ENCODE measurements at regions of chr20 and their contacts with region 1.

Region 1: DNA sequence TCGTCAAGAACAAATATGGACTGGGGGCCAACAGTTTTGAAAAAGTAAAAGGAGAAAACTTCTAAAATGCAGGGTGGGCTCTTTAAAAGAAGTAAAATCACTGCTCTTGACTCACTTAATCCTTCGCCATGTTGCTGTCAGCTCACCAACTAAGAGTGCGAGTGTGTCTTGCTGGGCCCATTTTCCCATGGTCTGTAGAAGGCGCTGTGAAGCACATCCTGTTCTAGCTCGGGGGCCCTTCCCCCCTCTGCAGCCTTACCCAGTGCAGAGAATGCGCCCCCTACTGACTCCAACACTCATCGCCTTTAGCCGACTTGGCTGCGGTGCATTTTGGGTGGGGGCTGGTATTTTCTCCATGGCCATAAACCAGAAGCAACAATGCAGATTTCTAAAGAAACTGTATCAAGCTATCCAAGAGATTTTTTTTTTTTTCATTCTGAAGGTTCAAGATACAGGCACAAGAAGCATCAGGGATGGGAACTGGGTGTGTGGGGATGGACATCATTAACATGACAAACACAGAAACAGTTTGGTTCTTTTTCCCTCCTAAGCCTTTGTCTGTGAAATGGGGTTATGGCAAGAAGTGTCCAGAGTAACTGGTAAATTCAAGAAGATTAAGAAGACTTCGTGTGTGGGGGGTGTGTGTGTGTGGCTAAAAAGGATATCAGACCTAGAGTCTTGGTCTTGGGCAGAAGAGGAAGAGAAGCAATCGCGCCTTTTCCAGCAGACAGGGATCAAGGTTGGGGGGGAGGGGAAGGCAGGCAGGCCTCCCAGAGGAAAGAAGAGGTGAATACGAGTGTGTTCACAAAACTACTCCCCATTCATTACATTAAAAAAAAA is 1.7 kb downstream of the ADNP start:
- DNase-seq: peak; percentile 79 to 96 (median 91)
- ATAC-seq: peak; percentile 50 to 69
- H3K4me3 Mint-ChIP-seq: peak overlapping the region; percentile 86 to 98 (median 93)
- H3K27ac Mint-ChIP-seq: peak overlapping the region; percentile 89 to 98 (median 96)
- H3K4me1 Mint-ChIP-seq: peaks cover 23 to 60% (median 56%) of the 10 kb centered on the region in 4 donors
- H3K27me3 Mint-ChIP-seq: no peaks in the 10 kb centered on the region

Region 2: DNA sequence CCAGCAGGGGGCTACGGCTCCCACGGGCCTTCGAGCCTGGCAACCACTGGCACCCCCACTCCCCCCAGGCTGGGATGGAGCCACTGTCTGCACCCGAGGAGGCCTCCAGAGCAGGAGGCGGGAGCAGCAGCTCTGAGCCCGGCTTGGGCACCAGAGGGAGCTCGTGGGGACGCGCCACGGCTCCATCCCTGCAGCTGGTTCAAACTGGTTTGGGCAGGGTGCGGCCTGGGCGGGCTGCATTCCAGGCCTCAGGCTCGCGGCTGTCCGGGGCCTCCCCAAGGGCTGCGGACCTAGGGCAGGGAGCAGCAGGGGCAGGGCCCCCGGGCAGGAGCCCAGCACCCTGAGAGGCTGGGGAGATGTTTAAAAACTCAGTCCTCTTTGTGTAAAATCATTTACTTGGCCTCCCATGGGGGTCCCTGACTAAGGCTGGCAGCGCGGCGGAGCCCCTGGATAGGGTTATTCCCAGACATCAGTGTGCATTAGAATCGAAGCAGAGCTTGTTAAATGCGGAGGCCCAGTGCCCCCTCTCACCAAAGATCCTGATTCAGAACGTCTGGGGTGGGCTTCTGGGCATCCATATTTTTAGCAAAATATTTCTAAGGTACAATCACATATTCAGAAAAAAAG is 138.8 kb before region 1 on chr20:
- POLR2A ChIA-PET with region 1: interaction called, 272 read pairs
- DNase-seq: peak; percentile 58 to 85 (median 74)
- ATAC-seq: peak; percentile 62 to 67
- H3K4me3 Mint-ChIP-seq: peak overlapping the region in 5 of 10 donors; percentile 10 to 51 (median 37)
- H3K27ac Mint-ChIP-seq: peak overlapping the region; percentile 66 to 93 (median 86)
- H3K4me1 Mint-ChIP-seq: peaks cover 0 to 19% (median 10%) of the 10 kb centered on the region in 4 donors
- H3K27me3 Mint-ChIP-seq: no peaks in the 10 kb centered on the region

Region 3: DNA sequence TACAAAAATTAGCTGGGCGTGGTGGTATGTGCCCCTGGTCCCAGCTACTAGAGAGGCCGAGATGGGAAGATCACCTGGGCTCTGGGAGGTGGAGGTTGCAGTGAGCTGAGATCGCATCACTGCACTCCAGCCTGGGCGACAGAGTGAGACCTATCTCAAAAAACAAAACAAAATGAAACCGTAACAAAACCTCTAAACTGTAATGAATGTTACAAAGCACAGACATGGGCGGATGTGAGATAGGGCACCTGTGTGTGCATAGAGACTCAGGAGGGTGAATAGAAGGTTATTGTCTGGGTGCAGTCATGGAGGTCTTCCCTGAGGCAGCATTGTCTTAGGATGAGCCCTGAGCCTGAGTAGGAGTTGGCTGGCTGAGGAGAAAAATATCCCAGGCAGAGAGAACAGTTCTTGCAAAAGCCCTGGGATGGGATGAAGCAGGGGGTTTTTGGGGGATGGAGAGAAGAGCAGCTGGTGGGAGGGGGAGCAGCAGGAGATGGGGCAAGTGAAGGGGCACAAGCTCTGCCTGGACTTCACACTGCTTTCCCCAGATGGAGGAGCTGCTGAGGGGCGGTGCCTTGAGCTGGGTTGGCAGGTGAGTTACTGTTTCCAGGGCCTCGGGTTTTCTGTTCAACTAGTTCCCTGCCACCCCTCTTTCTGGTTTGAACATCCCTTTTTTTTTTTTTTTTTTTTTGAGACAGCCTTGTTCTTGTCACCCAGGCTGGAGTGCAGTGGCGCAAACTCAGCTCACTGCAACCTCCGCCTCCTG is 129.4 kb before region 1 on chr20:
- POLR2A ChIA-PET with region 1: interaction called, 272 read pairs
- DNase-seq: no peak
- ATAC-seq: no peak
- H3K4me3 Mint-ChIP-seq: peak overlapping the region in 4 of 10 donors; percentile 3 to 46 (median 23)
- H3K27ac Mint-ChIP-seq: peak overlapping the region; percentile 22 to 88 (median 80)
- H3K4me1 Mint-ChIP-seq: peaks cover 25 to 66% (median 50%) of the 10 kb centered on the region in 4 donors
- H3K27me3 Mint-ChIP-seq: no peaks in the 10 kb centered on the region

Region 4: GRCh38 chr20:50815162-50815989 is 114.1 kb before region 1 on chr20:
- POLR2A ChIA-PET with region 1: interaction called, 69 read pairs
- DNase-seq: peak in 3 of 10 donors; percentile 26 to 29 (median 27)
- ATAC-seq: peak; percentile 35 to 40
- H3K4me3 Mint-ChIP-seq: peak overlapping the region; percentile 63 to 90 (median 84)
- H3K27ac Mint-ChIP-seq: peak overlapping the region; percentile 84 to 100 (median 95)
- H3K4me1 Mint-ChIP-seq: peaks cover 36 to 84% (median 79%) of the 10 kb centered on the region in 4 donors
- H3K27me3 Mint-ChIP-seq: peaks cover 0 to 2% (median 0%) of the 10 kb centered on the region in 5 donors

Region 5: DNA sequence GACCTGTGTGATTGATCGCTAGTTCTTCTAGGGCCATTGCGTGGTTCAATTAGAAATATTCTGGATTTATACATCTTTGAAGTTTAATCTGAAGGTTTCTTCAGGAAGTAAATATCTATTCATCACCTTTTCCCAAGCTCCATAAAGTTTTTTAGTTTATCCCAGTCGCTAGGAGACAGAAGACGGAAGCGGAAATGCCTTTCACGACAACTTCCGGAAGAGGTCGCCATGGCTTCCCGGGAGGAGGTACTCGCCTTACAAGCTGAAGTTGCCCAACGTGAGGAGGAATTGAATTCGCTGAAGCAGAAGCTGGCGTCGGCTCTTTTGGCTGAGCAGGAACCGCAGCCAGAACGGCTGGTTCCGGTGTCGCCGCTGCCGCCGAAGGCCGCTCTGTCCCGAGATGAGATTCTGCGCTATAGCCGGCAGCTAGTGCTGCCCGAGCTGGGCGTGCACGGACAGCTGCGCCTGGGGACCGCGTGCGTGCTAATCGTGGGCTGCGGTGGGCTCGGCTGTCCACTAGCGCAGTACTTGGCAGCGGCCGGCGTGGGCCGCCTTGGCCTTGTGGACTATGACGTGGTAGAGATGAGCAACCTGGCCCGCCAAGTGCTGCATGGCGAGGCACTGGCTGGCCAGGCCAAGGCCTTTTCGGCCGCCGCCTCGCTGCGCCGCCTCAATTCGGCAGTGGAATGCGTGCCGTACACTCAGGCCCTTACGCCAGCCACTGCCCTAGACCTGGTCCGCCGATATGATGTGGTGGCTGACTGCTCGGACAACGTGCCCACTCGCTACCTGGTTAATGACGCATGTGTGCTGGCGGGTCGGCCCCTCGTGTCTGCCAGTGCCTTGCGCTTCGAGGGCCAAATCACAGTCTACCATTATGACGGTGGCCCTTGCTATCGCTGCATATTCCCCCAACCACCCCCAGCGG is 29.4 kb after region 1 on chr20 and contains the start of gene MOCS3:
- POLR2A ChIA-PET with region 1: interaction called, 107 read pairs
- DNase-seq: peak; percentile 61 to 98 (median 84)
- ATAC-seq: peak; percentile 81 to 84
- H3K4me3 Mint-ChIP-seq: peak within 1 kb of the TSS; percentile 91 to 98 (median 96)
- H3K27ac Mint-ChIP-seq: peak within 1 kb of the TSS; percentile 98 to 100 (median 99)
- H3K4me1 Mint-ChIP-seq: peaks cover 20 to 71% (median 60%) of the 10 kb centered on the region in 4 donors
- H3K27me3 Mint-ChIP-seq: no peaks in the 10 kb centered on the region
- polyA plus RNA-seq, gene MOCS3: 3.5 to 4.8 (median 4.6) TPM

Region 6: DNA sequence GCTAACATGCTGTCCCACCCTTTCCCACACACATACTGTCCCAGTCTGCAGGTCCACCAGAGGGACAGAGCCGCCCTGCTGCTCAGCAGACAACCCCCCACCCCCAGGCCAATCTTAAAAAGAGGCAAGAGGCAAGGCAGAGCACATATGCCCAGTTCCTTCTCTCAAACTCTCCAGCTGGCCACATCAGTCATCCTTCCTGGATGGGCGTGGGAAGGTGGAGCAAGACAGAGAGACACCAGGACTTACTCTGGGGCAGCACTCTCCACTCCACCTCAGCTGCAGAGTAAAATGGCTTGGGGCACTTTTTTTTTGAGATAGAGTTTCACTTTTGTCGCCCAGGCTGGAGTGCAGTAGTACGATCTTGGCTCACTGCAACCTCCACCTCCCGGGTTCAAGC is 39.9 kb after region 1 on chr20:
- POLR2A ChIA-PET with region 1: no interaction called
- DNase-seq: no peak
- ATAC-seq: no peak
- H3K4me3 Mint-ChIP-seq: no peak overlapping the region
- H3K27ac Mint-ChIP-seq: no peak overlapping the region
- H3K4me1 Mint-ChIP-seq: peaks cover 0 to 6% (median 1%) of the 10 kb centered on the region in 4 donors
- H3K27me3 Mint-ChIP-seq: peaks cover 0 to 3% (median 0%) of the 10 kb centered on the region in 5 donors

Region 7: DNA sequence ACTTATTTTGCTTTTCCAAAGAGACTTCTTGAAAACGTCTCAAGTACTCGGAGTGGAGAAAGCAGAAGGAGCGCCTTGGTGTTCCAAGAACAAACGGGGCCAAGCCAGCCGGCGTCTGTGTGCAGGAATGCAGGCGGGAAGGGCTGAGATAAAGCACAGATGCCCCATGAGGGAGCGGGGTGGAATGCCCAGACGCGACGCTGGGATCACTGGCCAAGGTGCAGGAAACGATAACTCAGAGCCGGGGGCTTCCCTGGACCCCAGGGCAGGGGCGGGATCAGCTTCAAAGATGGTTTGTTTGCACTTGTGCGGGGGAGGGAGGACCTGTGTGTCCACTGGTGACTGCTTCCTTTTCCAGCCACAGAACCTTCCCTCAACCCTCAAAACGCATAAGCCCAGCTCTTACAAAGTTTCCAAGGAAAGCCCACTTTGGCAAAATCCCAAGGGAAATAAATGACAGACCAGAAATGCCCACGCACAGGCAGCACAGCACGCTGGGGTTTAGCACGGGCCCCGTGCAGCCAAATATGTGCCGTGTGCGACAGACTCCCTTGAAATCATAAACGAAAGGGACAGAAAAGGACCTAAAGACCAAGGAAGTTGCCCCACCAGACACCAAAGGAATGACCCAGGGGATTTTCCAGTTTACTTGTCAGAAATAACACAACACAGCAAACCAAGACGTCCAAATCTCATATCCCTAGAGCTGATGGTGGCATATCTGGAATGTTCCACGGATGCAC is 499.1 kb after region 1 on chr20:
- POLR2A ChIA-PET with region 1: no interaction called
- DNase-seq: no peak
- ATAC-seq: no peak
- H3K4me3 Mint-ChIP-seq: no peak overlapping the region
- H3K27ac Mint-ChIP-seq: peak overlapping the region in 1 of 10 donors; percentile 42
- H3K4me1 Mint-ChIP-seq: peaks cover 26 to 60% (median 41%) of the 10 kb centered on the region in 4 donors
- H3K27me3 Mint-ChIP-seq: no peaks in the 10 kb centered on the region

Measured in naive thymus-derived CD8-positive, alpha-beta T cell (primary cell).